ENCODE measurements at regions of chr4 and their contacts with region 1.

Region 1: GRCh38 chr4:17817020-17817419 is 6.2 kb downstream of the NCAPG start:
- DNase-seq: no peak
- H3K4me3 ChIP-seq: no peak overlapping the region
- H3K27ac ChIP-seq: no peak overlapping the region
- H3K4me1 ChIP-seq: no peaks in the 10 kb centered on the region
- H3K27me3 ChIP-seq: no peaks in the 10 kb centered on the region
- CTCF ChIP-seq: peak; percentile 17 to 55 (median 43)

Region 2: GRCh38 chr4:18593445-18594002 is 776.5 kb after region 1 on chr4:
- intact Hi-C with region 1: loop called (anchors 5 kb)
- DNase-seq: no peak
- H3K4me3 ChIP-seq: no peak overlapping the region
- H3K27ac ChIP-seq: no peak overlapping the region
- H3K4me1 ChIP-seq: no peaks in the 10 kb centered on the region
- H3K27me3 ChIP-seq: no peaks in the 10 kb centered on the region
- CTCF ChIP-seq: peak; percentile 37 to 76 (median 55)